Psoas muscle (tissue), 8 donors: ENCODE measurements at regions of chr13 and their contacts with region 1.

Region 1: GRCh38 chr13:50457415-50458393 is 385.8 kb downstream of the DLEU7 start:
- DNase-seq: peak in 1 of 2 donors; percentile 17
- ATAC-seq: peak in 1 of 4 donors; percentile 47
- H3K4me3 ChIP-seq: no peak overlapping the region
- H3K27ac ChIP-seq: no peak overlapping the region
- H3K4me1 ChIP-seq: peaks cover 23% of the 10 kb centered on the region
- H3K27me3 ChIP-seq: no peaks in the 10 kb centered on the region
- CTCF ChIP-seq: no peak

Region 2: GRCh38 chr13:50441130-50441529 is 16.6 kb before region 1 on chr13:
- intact Hi-C with region 1: loop called in 1 of 2 experiments (anchors 2 kb)
- DNase-seq: no peak
- ATAC-seq: no peak
- H3K4me3 ChIP-seq: no peak overlapping the region
- H3K27ac ChIP-seq: no peak overlapping the region
- H3K4me1 ChIP-seq: peaks cover 3% of the 10 kb centered on the region
- H3K27me3 ChIP-seq: no peaks in the 10 kb centered on the region
- CTCF ChIP-seq: no peak